ENCODE measurements at regions of chr13 and their contacts with region 1.

Region 1: DNA sequence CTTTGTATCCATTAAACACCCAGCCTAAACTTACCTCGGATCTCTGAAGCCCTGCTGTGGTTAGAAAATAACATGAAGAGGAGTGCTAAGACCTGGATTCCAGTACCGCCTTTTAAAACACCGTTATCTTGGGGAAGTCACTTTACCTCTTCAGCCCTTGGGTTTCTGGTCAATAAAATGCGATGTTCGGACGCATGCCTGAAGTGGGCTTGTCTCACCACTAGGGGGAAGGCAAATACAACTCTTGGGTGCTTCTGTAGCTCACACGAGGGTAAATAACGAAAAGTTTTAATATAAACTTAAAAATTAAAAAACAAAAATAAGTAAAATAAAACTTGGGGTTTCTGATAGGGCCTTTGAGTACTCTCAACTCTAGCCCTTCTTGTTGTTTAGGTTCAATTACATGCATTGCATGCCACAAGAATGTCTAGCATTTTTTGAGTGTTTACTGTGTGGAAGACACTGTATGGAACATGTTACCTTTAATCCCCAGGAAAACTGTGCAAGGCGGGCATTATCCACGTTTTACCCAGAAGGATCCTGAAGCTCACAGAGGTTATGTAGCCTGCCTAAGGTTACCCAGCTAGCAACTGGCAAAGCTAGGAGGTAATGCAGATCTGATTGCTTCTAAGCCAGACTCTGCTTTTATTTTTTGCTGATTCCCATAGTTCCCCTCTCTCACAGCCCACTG is 240.4 kb downstream of the LMO7 start:
- DNase-seq: no peak
- H3K4me3 ChIP-seq: no peak overlapping the region
- H3K27ac ChIP-seq: no peak overlapping the region
- H3K4me1 ChIP-seq: no peaks in the 10 kb centered on the region
- H3K27me3 ChIP-seq: no peaks in the 10 kb centered on the region
- CTCF ChIP-seq: peak; percentile 71 to 96 (median 87)
- POLR2A ChIP-seq: no peak

Region 2: DNA sequence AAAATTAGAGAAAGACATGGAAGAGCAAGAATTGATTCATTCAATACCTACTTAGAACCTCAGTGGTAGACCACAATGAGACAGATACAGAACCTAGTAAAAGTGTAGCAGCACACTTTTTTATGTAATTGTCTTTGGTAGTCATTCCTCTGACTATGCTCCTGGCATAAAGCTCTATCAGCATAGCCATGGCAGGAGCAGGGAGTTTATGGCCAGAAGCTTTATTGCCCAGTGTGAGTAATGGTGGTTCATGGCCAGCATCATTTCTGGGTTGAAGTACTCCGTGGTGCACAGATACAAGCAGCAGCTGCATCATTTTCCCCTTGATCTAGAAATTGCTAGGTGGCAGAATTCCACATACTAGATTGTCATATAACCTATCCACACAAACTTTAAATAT is 747.2 kb before region 1 on chr13:
- intact Hi-C with region 1: no loop called
- DNase-seq: no peak
- H3K4me3 ChIP-seq: no peak overlapping the region
- H3K27ac ChIP-seq: no peak overlapping the region
- H3K4me1 ChIP-seq: no peaks in the 10 kb centered on the region
- H3K27me3 ChIP-seq: no peaks in the 10 kb centered on the region
- CTCF ChIP-seq: no peak
- POLR2A ChIP-seq: no peak

Region 3: DNA sequence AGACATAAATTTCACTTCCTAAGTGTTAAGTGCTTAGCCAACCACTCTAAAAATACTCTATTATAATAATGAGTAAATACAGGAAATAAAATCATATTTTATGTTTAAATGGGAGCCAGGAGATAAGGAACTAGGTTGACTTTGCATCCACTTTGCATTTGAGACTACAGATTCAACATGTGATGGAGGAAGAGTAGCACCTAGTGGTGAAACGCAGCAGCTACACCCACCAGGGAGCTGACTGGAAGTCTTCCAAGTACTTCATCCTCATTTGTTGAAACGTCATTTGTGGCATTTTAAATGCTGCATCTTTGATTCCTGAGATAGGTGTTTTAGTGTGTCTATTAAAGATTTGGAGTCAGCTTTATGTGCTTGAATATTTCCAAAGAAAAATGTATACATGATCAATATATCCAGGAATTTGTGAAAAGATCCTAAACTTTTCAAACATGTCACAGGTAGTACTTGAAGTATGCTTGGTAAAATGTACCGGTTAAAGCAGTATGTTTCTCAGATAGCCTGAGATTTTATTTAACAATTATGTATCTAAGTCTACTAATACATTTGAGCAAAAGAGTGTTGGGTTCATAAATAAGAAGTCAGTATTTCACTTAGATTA is 1027.1 kb after region 1 on chr13:
- intact Hi-C with region 1: loop called (anchors 10 kb)
- DNase-seq: no peak
- H3K4me3 ChIP-seq: no peak overlapping the region
- H3K27ac ChIP-seq: no peak overlapping the region
- H3K4me1 ChIP-seq: no peaks in the 10 kb centered on the region
- H3K27me3 ChIP-seq: no peaks in the 10 kb centered on the region
- CTCF ChIP-seq: peak; percentile 79 to 95 (median 85)
- POLR2A ChIP-seq: no peak